ENCODE measurements at regions of chr10 and their contacts with region 1.

Region 1: DNA sequence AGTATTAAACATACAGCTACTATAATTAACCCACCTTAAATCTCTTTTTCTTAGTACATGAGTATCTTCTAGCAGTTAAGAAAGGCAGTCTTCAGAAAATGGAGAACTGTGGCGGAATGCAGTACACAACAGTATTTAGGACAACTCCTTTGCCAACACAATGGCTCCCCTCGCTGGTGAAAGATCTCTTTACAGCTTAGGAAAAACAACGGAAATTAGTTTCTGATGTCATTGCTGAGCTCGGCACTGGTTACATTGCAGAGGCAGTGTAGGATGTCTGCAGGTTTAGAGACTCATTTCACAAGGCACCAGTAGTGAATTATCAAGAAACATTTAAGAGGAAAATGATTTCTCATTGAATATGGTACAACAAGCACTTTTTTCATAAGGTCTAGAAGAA is 43.4 kb downstream of the GLRX3 start:
- DNase-seq: peak; percentile 70
- ATAC-seq: peak; percentile 84
- H3K4me3 Mint-ChIP-seq: no peak overlapping the region
- H3K27ac Mint-ChIP-seq: peak overlapping the region; percentile 59
- H3K4me1 Mint-ChIP-seq: peaks cover 14% of the 10 kb centered on the region
- H3K27me3 Mint-ChIP-seq: no peaks in the 10 kb centered on the region

Region 2: GRCh38 chr10:129883626-129884396 is 295.8 kb before region 1 on chr10:
- CTCF ChIA-PET with region 1: no interaction called
- POLR2A ChIA-PET with region 1: no interaction called
- intact Hi-C with region 1: loop called in 1 of 2 experiments (anchors 5 kb)
- DNase-seq: no peak
- ATAC-seq: no peak
- H3K4me3 Mint-ChIP-seq: no peak overlapping the region
- H3K27ac Mint-ChIP-seq: no peak overlapping the region
- H3K4me1 Mint-ChIP-seq: no peaks in the 10 kb centered on the region
- H3K27me3 Mint-ChIP-seq: peaks cover 4% of the 10 kb centered on the region

Region 3: DNA sequence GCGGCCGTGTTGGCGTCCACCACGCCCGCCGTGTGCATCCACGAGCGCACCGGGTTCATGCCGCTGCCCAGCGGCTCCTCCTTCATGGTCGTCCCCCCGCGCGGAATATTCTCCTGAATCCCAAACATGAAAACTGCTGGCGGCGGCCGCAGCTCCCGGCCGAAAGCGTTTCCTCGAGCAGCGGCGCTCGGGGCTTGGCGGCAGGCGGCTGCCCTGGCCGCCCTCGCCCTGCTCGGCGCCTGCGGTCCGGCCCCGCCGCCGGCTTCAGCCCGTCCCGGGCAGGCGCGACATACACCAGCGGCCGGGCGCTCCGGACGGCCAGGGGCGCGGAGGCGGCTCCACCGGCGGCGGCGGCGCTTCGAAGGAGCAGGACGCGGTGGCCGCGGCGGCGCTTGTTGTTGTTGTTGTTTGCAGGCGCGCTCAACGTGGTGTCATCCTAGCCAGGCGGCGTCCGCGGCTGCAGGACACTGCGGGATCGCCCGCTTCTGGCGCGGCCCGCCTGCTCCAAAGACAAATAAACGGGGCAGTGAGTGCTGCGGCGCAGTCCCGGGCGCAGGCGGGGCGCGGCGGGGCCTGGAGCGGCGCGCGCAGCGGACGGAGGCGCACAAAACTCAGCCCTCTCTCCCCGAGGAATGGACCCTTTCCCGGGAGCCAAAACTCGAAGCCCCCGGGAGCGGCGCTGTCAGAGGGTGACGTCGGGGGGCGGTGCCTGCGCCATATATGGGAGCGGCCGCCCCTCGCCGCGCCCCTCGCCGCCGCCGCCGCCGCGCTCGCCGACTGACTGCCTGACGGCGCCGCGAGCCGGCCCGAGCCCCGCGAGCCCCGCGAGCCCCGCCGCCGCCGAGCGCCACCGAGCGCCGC is 215.8 kb before region 1 on chr10 and contains the start of gene EBF3:
- CTCF ChIA-PET with region 1: no interaction called
- POLR2A ChIA-PET with region 1: no interaction called
- intact Hi-C with region 1: loop called in 1 of 2 experiments (anchors 10 kb)
- DNase-seq: peak; percentile 69
- ATAC-seq: peak; percentile 72
- H3K4me3 Mint-ChIP-seq: peak within 1 kb of the TSS; percentile 49
- H3K27ac Mint-ChIP-seq: no peak within 1 kb of the TSS
- H3K4me1 Mint-ChIP-seq: peaks cover 18% of the 10 kb centered on the region
- H3K27me3 Mint-ChIP-seq: peaks cover 57% of the 10 kb centered on the region
- total RNA-seq, gene EBF3: not detected

Region 4: DNA sequence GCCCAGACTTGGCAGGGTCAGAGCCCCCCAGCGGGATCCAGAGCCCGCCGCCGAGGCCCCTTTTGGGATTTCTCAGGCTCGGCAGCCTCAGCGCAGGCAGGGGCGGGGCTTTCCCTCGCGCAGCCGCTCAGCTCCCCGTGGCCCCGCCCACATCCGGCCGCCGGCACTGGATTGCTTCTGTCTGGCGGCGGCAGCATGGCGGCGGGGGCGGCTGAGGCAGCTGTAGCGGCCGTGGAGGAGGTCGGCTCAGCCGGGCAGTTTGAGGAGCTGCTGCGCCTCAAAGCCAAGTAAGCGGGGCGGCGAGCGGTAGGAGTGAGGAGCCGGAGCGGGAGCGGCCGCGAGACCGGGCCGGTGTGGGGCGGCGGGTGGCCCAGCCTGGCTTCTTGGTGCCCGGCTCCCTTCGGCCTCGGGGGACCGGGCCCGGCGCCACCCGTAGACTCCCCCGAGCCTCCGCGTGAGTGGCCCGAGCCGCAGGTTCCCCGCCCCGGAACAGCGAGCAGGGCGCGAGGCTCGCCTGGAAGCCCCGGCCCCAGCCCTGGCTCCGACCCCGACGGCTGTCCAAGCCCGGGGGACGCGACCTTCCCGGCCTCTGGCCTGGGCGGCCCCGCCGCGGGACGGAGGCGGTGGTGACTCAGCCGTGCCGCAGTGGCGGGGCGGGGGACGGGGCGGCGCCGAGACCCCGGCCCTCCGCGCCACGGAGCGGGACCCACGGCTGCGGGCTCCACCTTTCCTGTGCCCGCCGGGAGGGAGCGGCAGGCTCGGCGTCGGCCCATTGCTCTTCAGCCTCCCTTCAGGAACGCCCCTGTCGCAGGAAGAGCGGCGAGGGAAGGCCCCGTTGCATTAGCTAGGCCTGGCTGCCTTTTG is 43.2 kb before region 1 on chr10 and contains the start of gene GLRX3:
- CTCF ChIA-PET with region 1: interaction called, 6 read pairs
- POLR2A ChIA-PET with region 1: no interaction called
- intact Hi-C with region 1: loop called (anchors 2 to 5 kb)
- DNase-seq: peak; percentile 95
- ATAC-seq: peak; percentile 82
- H3K4me3 Mint-ChIP-seq: peak within 1 kb of the TSS; percentile 84
- H3K27ac Mint-ChIP-seq: peak within 1 kb of the TSS; percentile 82
- H3K4me1 Mint-ChIP-seq: peaks cover 41% of the 10 kb centered on the region
- H3K27me3 Mint-ChIP-seq: peaks cover 2% of the 10 kb centered on the region
- total RNA-seq, gene GLRX3: 117 to 123 TPM

Measured in activated CD4-positive, alpha-beta T cell treated with anti-CD3 and anti-CD28 coated beads for 36 hours (primary cell).